Posterior cingulate gyrus (tissue), 11 donors: ENCODE measurements at regions of chr6 and their contacts with region 1.

Region 1: GRCh38 chr6:44456070-44456965 is 68.8 kb downstream of the CDC5L start:
- DNase-seq: peak in 2 of 10 donors; percentile 76 to 88

Region 2: DNA sequence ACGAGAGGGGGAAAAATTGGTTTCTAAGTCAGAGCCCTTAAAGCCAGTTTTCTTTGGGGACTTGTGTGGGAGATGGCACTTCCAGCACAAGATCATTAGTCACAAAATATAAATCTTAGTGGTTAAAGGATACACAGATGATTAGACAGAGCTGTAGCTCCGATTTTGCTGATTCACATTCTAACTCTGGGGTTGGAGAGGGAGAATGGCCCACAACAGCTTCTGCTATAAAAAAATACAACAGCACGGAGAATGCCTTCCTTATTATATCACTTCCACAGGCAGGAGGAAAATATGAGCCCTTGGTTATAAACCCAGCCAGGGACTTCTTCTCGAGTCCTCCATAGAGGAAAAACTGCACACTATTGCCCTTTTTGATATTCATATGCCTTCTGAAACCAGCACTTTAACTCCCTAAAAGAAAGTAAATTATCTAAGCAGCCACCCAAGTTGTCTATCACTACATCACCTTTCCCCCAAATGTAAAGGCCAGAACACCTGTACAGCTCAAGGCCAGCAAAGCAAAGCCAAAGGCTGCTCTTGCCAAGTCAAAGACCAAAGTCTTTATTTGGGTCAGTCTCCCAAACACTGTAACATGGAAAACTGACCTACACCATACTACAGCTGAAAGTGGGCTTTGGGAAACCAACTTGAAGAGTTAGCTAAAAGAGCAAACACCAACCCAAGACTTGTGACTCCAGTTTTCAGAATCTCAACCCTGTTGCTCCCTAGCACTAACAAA is 339.5 kb before region 1 on chr6:
- intact Hi-C with region 1: no loop called
- DNase-seq: no peak

Region 3: DNA sequence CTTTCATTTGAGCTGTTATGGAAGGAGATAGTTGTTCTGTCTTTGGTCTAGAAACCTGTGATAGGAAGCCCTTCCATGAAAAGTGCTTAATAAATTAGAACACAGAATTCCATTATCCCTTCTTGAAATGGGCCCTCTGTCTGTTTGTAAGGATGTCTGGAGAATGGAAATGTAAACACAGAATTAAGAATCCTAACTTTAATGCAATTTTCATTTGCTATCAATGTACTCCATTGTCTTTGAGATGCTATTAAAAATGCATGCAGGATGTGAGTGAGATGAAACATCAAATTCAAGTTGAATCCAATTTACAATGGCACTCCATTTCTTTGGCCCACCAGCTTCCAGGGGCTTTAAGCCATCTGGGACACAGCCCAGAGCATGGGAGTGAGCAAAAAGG is 129.2 kb before region 1 on chr6:
- intact Hi-C with region 1: no loop called
- DNase-seq: no peak

Region 4: GRCh38 chr6:44431118-44431725 is 25.1 kb before region 1 on chr6:
- intact Hi-C with region 1: loop called (anchors 2 kb)
- DNase-seq: peak in 3 of 10 donors; percentile 25 to 41 (median 34)

Region 5: GRCh38 chr6:44489910-44490604 is 33.7 kb after region 1 on chr6:
- intact Hi-C with region 1: no loop called
- DNase-seq: peak in 2 of 10 donors; percentile 51 to 91